Activated naive CD4-positive, alpha-beta T cell treated with anti-CD3 and anti-CD28 coated beads for 36 hours (primary cell): ENCODE measurements at regions of chr9 and their contacts with region 1.

Region 1: DNA sequence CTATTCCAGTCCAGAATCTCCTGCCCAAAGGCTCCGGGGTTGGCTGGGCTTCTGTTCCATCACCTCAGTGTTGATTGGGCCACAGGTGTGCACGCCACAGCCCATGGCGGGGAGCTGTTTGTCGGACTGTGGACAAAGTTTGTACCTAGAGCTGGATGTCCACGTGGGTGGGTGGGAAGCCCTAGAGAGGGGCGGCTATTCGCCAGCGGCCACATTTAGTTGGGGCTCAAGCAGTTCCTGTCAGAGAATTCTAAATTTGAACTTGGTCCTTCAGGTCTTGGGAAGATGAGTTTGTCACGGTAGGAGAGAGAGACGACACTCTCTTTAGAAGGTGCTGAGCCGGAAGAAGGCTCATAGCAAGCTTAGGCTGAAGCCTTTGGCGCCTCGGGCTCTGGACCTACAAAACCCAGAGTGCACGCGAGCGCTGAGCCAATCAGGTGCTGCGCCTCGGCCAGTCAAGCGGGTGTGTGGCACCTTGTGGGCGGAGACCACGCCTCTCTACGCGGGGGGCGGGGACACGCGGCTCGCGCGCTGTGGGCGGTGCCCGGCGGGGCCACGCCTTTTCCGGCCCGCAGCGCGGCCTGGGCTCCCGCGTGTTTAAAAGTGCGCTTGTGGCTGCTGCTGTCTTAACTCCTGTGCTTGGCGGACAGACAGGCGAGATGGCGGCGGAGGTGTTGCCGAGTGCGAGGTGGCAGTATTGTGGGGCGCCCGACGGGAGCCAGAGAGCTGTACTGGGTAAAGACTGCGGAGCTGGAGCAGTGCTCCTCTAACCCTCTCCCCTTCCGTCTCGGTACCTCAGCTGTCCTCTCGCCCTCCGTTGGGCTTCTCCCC is at the start of gene POLR1E:
- DNase-seq: peak; percentile 97
- H3K4me3 Mint-ChIP-seq: peak within 1 kb of the TSS; percentile 99
- H3K27ac Mint-ChIP-seq: peak within 1 kb of the TSS; percentile 85
- H3K4me1 Mint-ChIP-seq: peaks cover 39% of the 10 kb centered on the region
- H3K27me3 Mint-ChIP-seq: peaks cover 6% of the 10 kb centered on the region
- total RNA-seq, gene POLR1E: 60.7 to 62.9 TPM

Region 2: DNA sequence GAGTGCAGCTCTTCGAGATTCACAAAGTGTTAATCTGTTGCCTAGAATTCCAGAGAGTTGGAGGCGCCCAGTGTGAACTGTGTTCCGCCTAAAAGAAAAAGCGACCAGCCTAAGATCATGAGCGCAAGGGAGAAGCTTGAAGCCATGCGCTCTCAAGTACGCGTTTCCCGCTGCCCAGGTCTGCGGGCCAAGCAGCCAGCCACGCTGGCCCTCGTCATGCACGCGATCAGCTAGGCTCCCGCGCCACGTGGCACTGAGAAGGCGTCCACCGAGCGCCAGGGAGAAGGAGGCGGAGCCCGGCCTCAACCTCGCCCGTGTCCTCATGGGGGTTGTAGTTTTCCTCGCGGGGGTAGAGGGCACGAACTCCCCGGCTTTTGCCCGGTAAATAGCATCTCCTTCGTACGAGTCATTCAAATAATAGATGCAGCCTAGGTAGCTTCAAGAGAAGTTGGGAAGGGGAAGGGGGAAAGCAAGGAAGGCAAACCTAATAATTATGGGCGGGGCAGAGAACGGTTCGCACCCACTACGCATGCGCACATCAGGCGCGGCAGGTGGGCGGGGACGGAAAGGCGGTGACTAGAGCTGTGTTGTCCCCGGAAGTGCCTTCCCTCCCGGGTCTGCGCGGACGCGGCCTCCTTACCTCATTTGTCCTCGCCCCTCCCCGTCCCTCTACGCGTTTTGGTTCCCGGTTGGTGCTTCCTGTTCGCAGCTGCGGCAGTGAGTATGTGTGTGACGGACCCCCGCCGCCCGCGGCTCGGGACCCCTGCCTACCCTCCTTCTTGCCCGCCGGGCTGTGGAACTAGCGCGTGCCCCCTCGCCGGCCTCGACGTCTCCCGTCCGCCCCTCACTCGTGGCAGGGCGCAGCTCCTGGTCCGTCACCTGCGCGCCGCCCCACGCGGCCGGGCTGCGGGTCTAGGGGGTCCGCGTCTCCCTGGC is 365.4 kb before region 1 on chr9 and contains the start of gene ZCCHC7:
- CTCF ChIA-PET with region 1: no interaction called
- intact Hi-C with region 1: no loop called
- DNase-seq: peak; percentile 98
- H3K4me3 Mint-ChIP-seq: peak within 1 kb of the TSS; percentile 94
- H3K27ac Mint-ChIP-seq: peak within 1 kb of the TSS; percentile 96
- H3K4me1 Mint-ChIP-seq: peaks cover 35% of the 10 kb centered on the region
- H3K27me3 Mint-ChIP-seq: no peaks in the 10 kb centered on the region
- total RNA-seq, gene ZCCHC7: 28.8 to 29.1 TPM

Region 3: GRCh38 chr9:37415011-37415719 is 70.4 kb before region 1 on chr9:
- CTCF ChIA-PET with region 1: interaction called, 4 read pairs
- intact Hi-C with region 1: loop called (anchors 1 kb)
- DNase-seq: peak; percentile 90
- H3K4me3 Mint-ChIP-seq: peak overlapping the region; percentile 34
- H3K27ac Mint-ChIP-seq: no peak overlapping the region
- H3K4me1 Mint-ChIP-seq: peaks cover 15% of the 10 kb centered on the region
- H3K27me3 Mint-ChIP-seq: peaks cover 5% of the 10 kb centered on the region

Region 4: DNA sequence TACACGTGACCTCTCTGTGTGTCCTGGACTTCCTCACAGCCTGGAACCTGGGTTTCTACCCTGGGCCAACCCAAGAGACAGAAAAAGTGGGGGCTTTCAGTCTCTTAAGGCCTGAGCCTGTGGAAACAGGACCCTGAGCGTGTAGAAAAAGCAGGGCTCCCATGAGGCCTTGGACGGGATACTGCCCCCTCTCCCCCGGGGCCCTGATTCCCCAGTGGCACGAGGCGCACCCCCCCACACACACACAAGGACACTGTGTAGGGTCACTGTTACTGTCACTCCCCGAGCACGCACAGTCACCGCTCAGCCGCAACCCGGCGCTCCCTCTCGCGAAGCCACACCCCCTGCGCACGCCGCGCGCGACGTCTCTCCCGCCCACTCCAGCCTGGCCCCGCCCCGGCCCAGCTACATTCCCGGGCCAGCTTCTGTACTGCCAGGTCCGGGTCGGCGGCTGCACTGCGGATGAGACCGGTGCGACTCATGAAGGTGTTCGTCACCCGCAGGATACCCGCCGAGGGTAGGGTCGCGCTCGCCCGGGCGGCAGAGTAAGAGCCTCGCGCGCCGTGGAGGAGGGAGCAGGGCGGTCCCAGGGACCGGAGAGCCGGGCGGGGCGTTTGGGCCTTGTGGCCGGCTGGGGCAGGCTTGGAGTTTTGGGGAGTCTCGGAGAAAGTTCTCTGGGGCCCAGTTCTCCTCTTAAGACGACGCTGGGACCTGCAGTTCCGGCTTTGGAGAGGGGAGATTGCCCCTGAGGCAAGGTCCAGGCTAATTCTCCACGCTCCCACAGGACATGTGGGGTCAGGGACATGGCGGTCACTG is 63.1 kb before region 1 on chr9 and contains the start of gene GRHPR:
- CTCF ChIA-PET with region 1: no interaction called
- intact Hi-C with region 1: loop called (anchors 1 kb)
- DNase-seq: peak; percentile 89
- H3K4me3 Mint-ChIP-seq: peak within 1 kb of the TSS; percentile 93
- H3K27ac Mint-ChIP-seq: peak within 1 kb of the TSS; percentile 88
- H3K4me1 Mint-ChIP-seq: peaks cover 24% of the 10 kb centered on the region
- H3K27me3 Mint-ChIP-seq: no peaks in the 10 kb centered on the region
- total RNA-seq, gene GRHPR: 72.8 to 75.6 TPM

Region 5: GRCh38 chr9:37575921-37576721 is 90.5 kb after region 1 on chr9 and contains the start of gene FBXO10:
- CTCF ChIA-PET with region 1: interaction called, 4 read pairs
- intact Hi-C with region 1: loop called (anchors 5 kb)
- DNase-seq: peak; percentile 47
- H3K4me3 Mint-ChIP-seq: peak within 1 kb of the TSS; percentile 77
- H3K27ac Mint-ChIP-seq: no peak within 1 kb of the TSS
- H3K4me1 Mint-ChIP-seq: peaks cover 21% of the 10 kb centered on the region
- H3K27me3 Mint-ChIP-seq: no peaks in the 10 kb centered on the region
- total RNA-seq, gene FBXO10: 1.0 to 1.1 TPM

Region 6: DNA sequence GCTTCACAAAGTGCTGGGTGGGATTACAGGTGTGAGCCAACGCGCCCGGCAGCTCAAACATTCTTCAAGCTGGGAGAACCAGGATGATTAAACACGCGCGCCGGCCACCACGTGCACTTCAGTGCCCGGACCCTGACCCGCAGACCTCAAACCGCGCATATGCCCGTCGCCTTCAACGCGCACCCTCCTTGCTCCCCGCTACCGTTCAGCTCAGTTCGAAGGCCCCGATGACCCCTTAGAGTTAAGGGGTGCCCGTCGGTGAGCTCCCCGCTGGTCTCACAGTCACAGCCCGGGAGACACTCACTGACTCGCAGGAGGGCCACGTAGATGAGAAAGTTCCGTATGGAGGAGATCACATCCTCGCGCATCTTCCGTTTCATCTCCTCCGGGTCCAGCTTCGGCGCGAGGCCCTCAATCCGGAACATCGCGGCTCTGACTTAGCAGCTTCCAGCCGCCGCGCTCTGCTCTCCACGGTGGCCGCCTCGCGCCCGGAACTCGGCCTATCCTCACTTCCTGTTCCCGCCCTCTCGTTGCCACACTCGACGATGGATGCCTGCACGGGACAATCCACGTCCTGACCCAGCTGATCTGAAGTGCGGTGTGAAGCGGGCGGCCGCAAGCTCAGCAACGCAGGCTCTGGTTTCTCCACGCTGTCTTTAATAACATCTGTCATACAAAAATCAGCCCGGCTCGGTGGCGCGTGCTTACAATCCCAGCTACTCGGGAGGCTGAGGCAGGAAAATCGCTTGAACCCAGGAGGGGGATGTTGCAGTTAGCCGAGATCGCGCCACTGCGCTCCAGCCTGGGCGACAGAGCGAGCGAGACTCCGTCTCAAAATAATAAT is 106.7 kb after region 1 on chr9 and contains the start of gene TOMM5:
- CTCF ChIA-PET with region 1: no interaction called
- intact Hi-C with region 1: loop called (anchors 1 kb)
- DNase-seq: peak; percentile 96
- H3K4me3 Mint-ChIP-seq: peak within 1 kb of the TSS; percentile 92
- H3K27ac Mint-ChIP-seq: peak within 1 kb of the TSS; percentile 93
- H3K4me1 Mint-ChIP-seq: peaks cover 37% of the 10 kb centered on the region
- H3K27me3 Mint-ChIP-seq: peaks cover 3% of the 10 kb centered on the region
- total RNA-seq, gene TOMM5: 136 to 140 TPM

Region 7: GRCh38 chr9:37753489-37754190 is 268.0 kb after region 1 on chr9 and contains the start of gene TRMT10B:
- CTCF ChIA-PET with region 1: no interaction called
- intact Hi-C with region 1: loop called (anchors 5 kb)
- DNase-seq: peak; percentile 77
- H3K4me3 Mint-ChIP-seq: peak within 1 kb of the TSS; percentile 96
- H3K27ac Mint-ChIP-seq: peak within 1 kb of the TSS; percentile 85
- H3K4me1 Mint-ChIP-seq: peaks cover 32% of the 10 kb centered on the region
- H3K27me3 Mint-ChIP-seq: no peaks in the 10 kb centered on the region
- total RNA-seq, gene TRMT10B: 8.1 to 9.5 TPM

Region 8: GRCh38 chr9:37784616-37785483 is 299.2 kb after region 1 on chr9 and contains the start of gene EXOSC3:
- CTCF ChIA-PET with region 1: no interaction called
- intact Hi-C with region 1: loop called (anchors 2 kb)
- DNase-seq: peak; percentile 91
- H3K4me3 Mint-ChIP-seq: peak within 1 kb of the TSS; percentile 96
- H3K27ac Mint-ChIP-seq: peak within 1 kb of the TSS; percentile 94
- H3K4me1 Mint-ChIP-seq: peaks cover 37% of the 10 kb centered on the region
- H3K27me3 Mint-ChIP-seq: no peaks in the 10 kb centered on the region
- total RNA-seq, gene EXOSC3: 93.7 to 99.7 TPM